Mammary epithelial cell (primary cell): ENCODE measurements at regions of chrX and their contacts with region 1.

Region 1: GRCh38 chrX:134990801-134991481 is at the start of gene SMIM10:
- DNase-seq: peak; percentile 29
- H3K4me3 ChIP-seq: no peak within 1 kb of the TSS
- H3K27ac ChIP-seq: no peak within 1 kb of the TSS
- H3K4me1 ChIP-seq: peaks cover 5% of the 10 kb centered on the region
- H3K27me3 ChIP-seq: no peaks in the 10 kb centered on the region
- CTCF ChIP-seq: no peak
- total RNA-seq, gene SMIM10: 0.17 TPM in 1 of 2 donors, not detected in the other

Region 2: DNA sequence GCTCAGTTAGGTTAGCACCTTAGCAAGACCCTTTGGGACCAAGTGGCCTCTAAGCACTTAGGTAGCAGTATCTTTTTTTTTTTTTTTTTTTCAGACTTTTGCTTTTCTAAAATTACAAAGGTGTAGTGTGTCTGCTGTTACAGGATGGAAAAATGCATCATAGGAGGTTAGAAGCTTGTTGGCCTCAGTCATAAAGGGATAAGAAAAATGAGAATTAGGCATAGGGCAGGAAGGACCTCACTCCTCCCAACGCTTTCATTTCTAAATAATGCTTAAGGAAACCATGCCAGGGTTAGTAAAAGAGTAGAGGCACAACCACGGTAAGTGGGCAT is 184.3 kb before region 1 on chrX:
- CTCF ChIA-PET with region 1: interaction called, 19 read pairs
- dilution Hi-C with region 1: no loop called
- in situ Hi-C with region 1: no loop called
- intact Hi-C with region 1: no loop called
- DNase-seq: no peak
- H3K4me3 ChIP-seq: peak overlapping the region in 2 of 3 experiments; percentile 55 to 64
- H3K27ac ChIP-seq: no peak overlapping the region
- H3K4me1 ChIP-seq: no peaks in the 10 kb centered on the region
- H3K27me3 ChIP-seq: no peaks in the 10 kb centered on the region
- CTCF ChIP-seq: no peak

Region 3: DNA sequence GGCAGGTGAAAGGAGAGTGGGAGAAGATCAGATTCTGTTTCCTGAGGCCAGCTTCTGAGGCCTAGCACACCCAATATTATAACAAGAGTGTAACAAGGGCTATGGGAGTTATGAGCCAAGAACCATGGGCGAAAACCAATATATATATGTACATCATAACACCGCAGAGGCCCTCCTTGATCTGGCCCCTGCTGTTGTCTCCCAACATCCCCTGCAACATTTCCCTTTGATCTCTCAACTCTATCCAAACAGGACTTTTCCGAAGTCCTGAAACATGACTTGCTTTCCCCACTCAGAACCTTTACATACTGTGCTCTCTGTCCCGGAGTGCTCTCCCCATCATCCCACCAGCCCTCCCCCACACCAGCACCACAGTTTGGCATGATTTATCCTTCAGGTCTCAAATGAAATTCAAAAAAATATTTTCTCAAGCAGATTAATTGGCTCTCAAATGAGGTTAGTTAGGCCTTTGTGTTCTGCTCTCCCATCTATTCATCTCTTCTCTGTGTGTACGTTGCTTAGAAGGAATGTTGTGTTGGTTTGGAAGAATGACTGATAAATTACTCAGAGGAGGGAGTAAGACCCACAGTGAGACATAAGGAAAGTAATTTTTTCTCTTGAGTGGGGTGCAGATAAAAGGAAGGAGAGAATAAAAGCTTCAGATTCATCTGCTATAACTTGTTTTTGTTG is 58.3 kb before region 1 on chrX:
- CTCF ChIA-PET with region 1: no interaction called
- dilution Hi-C with region 1: no loop called
- in situ Hi-C with region 1: no loop called
- intact Hi-C with region 1: no loop called
- DNase-seq: peak; percentile 57
- H3K4me3 ChIP-seq: no peak overlapping the region
- H3K27ac ChIP-seq: no peak overlapping the region
- H3K4me1 ChIP-seq: no peaks in the 10 kb centered on the region
- H3K27me3 ChIP-seq: no peaks in the 10 kb centered on the region
- CTCF ChIP-seq: no peak

Region 4: DNA sequence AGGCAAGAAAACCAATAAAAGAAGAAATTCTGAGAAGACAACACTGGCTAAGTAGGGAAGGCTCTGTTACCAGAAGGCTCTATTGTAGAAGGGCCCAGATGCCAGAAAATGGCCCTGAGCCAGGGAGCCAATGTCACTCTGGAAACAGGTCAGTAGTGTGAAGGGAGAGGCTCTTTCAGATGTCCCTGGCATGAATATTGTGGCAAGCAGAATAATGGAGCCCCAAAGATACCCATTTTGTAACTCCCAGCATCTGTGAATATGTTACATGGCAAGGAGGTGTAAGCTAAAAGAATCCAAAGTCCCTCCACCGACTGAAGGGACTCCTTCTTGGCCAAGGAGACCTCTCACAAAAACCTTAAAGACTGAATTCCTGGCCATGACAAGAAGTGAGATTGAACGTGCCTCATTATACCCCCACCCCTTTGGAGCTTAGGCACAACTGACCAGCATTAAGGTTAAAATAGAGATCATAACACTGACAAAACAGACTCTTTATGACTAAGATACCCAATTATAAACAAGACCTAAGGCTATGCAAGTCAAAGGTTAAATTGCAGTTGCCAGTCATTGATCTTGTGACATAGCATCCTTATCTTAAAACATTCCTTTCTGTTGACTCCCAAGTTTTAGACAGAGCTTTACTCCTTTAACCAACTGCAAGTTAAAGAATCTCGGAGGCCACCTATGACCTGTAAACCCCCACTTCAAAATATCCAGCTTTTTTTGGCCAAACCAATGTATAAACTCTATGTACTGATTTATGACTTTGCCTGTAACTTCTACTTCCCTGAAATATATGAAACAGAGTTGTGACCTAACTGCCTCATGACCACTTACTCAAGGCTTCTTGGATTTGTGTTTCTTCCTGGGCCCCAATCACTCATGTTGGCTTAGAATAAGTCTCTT is 42.4 kb before region 1 on chrX:
- CTCF ChIA-PET with region 1: no interaction called
- dilution Hi-C with region 1: no loop called
- in situ Hi-C with region 1: no loop called
- intact Hi-C with region 1: no loop called
- DNase-seq: peak; percentile 3
- H3K4me3 ChIP-seq: no peak overlapping the region
- H3K27ac ChIP-seq: no peak overlapping the region
- H3K4me1 ChIP-seq: no peaks in the 10 kb centered on the region
- H3K27me3 ChIP-seq: no peaks in the 10 kb centered on the region
- CTCF ChIP-seq: no peak